KBM-7 (cell line): ENCODE measurements at regions of chrX and their contacts with region 1.

Region 1: GRCh38 chrX:48278958-48279357 is 23.8 kb downstream of the SSX1 start:
- DNase-seq: peak; percentile 4

Region 2: DNA sequence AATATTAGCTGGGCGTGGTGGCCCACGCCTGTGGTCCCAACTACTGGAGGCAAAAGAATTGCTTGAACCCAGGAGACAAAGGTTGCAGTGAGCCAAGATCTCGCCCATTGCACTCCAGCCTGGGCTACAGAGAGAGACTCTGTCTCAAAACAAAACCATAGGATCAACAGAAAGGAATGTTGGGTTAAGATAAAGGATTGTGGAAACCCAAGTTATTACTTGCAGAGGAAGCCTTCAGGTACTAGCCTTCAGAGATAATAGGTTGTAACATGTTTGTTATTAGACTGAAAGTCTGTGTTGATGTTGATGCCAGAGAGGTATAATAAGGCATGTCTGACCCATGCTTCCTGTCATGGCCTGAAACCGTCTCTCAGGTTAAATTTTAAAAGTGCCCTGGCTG is 99.3 kb before region 1 on chrX:
- in situ Hi-C with region 1: loop called (anchors 25 kb)
- DNase-seq: no peak

Region 3: GRCh38 chrX:48451708-48452107 is 172.8 kb after region 1 on chrX:
- in situ Hi-C with region 1: loop called (anchors 25 kb)
- DNase-seq: no peak

Region 4: GRCh38 chrX:48683411-48683982 is 404.5 kb after region 1 on chrX and contains the start of gene WAS:
- in situ Hi-C with region 1: no loop called
- DNase-seq: peak; percentile 95